Activated naive CD4-positive, alpha-beta T cell treated with anti-CD3 and anti-CD28 coated beads for 36 hours (primary cell): ENCODE measurements at regions of chr10 and their contacts with region 1.

Region 1: DNA sequence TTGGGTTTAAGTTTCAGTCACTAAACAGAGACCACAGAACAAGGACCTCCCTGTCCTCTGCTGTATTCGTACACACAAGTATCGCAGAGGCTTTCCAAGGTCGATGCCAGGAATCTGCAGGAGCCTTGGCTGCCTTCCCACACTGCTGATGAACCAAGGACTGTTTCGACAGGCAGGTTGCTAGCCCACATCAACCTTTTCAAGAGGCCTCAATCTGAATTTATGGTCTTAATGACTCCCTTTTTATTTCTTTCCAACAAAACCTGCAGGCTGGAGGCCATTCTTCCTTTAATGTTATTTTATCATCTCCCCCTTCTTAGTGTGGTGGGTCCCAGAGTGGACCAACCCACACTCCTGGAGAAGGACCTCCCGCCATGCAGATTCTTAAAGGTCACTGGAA is 45.6 kb downstream of the JCAD start:
- DNase-seq: no peak
- H3K4me3 Mint-ChIP-seq: no peak overlapping the region
- H3K27ac Mint-ChIP-seq: no peak overlapping the region
- H3K4me1 Mint-ChIP-seq: peaks cover 8% of the 10 kb centered on the region
- H3K27me3 Mint-ChIP-seq: peaks cover 33% of the 10 kb centered on the region

Region 2: GRCh38 chr10:30039567-30039966 is 25.8 kb after region 1 on chr10:
- CTCF ChIA-PET with region 1: no interaction called
- intact Hi-C with region 1: loop called (anchors 2 kb)
- DNase-seq: no peak
- H3K4me3 Mint-ChIP-seq: no peak overlapping the region
- H3K27ac Mint-ChIP-seq: no peak overlapping the region
- H3K4me1 Mint-ChIP-seq: peaks cover 2% of the 10 kb centered on the region
- H3K27me3 Mint-ChIP-seq: peaks cover 64% of the 10 kb centered on the region